ENCODE measurements at regions of chr12 and their contacts with region 1.

Region 1: DNA sequence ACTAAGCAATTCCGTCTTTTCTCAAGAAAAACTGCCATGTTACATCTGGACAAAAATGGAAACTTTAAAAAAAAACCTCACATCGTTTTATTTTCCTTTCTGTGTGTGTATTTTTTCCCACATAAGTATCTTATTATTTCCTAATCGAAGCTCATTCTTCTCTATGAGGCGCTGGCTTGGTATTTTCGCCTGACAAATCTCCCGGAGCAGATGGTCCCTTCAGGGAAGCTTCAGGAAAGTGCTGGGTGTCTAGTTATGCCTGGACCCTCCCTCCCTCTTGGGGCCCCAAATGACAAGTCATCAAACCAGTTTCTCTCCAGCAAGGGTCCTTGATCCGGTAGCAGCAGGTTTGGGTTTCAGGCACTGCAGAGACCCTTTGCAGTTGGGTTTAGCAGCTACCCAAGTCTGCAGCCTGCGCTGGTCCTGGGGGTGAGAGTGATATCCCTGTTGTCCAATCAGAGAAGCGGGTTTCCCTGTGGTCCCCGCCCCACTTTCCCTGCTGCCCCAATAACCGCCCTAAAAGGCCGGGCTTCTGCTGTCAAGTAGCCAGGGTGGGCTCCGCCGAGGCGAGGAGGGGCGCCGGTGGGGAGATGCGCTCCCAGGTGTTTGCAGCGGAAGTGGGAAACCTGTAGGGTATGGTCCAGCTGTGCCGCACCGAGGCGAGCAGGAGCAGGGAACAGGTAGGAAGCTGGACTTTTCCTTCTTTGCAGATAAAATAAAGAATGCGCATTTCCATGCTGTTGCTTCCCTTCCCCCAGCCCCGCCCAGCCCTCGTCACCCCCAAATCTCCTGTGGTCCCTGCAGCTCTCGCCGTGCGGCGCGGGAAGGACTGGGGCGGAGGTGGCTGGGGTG is at the start of gene CNTN1:
- DNase-seq: peak; percentile 74
- H3K4me3 ChIP-seq: peak within 1 kb of the TSS; percentile 58 to 73 (median 67)
- H3K27ac ChIP-seq: peak within 1 kb of the TSS; percentile 30
- H3K4me1 ChIP-seq: peaks cover 28% of the 10 kb centered on the region
- H3K27me3 ChIP-seq: no peaks in the 10 kb centered on the region
- CTCF ChIP-seq: no peak
- total RNA-seq, gene CNTN1: 29.7 to 61.1 TPM

Region 2: GRCh38 chr12:40622246-40622838 is 69.8 kb before region 1 on chr12:
- CTCF ChIA-PET with region 1: no interaction called
- dilution Hi-C with region 1: no loop called
- in situ Hi-C with region 1: no loop called
- intact Hi-C with region 1: loop called (anchors 5 kb)
- DNase-seq: peak; percentile 46
- H3K4me3 ChIP-seq: no peak overlapping the region
- H3K27ac ChIP-seq: no peak overlapping the region
- H3K4me1 ChIP-seq: no peaks in the 10 kb centered on the region
- H3K27me3 ChIP-seq: no peaks in the 10 kb centered on the region
- CTCF ChIP-seq: peak; percentile 82 to 83

Region 3: GRCh38 chr12:40727774-40728483 is 35.8 kb after region 1 on chr12:
- CTCF ChIA-PET with region 1: no interaction called
- dilution Hi-C with region 1: no loop called
- in situ Hi-C with region 1: no loop called
- intact Hi-C with region 1: loop called (anchors 5 kb)
- DNase-seq: peak; percentile 35
- H3K4me3 ChIP-seq: no peak overlapping the region
- H3K27ac ChIP-seq: no peak overlapping the region
- H3K4me1 ChIP-seq: peaks cover 3% of the 10 kb centered on the region
- H3K27me3 ChIP-seq: no peaks in the 10 kb centered on the region
- CTCF ChIP-seq: no peak

Region 4: GRCh38 chr12:40829738-40830144 is 137.6 kb after region 1 on chr12:
- CTCF ChIA-PET with region 1: no interaction called
- dilution Hi-C with region 1: no loop called
- in situ Hi-C with region 1: no loop called
- intact Hi-C with region 1: loop called (anchors 5 kb)
- DNase-seq: peak; percentile 83
- H3K4me3 ChIP-seq: no peak overlapping the region
- H3K27ac ChIP-seq: peak overlapping the region; percentile 80
- H3K4me1 ChIP-seq: peaks cover 23% of the 10 kb centered on the region
- H3K27me3 ChIP-seq: no peaks in the 10 kb centered on the region
- CTCF ChIP-seq: no peak

Region 5: GRCh38 chr12:40907115-40907521 is 215.0 kb after region 1 on chr12:
- CTCF ChIA-PET with region 1: no interaction called
- dilution Hi-C with region 1: no loop called
- in situ Hi-C with region 1: no loop called
- intact Hi-C with region 1: loop called (anchors 2 kb)
- DNase-seq: peak; percentile 91
- H3K4me3 ChIP-seq: peak overlapping the region in 2 of 3 experiments; percentile 3 to 11
- H3K27ac ChIP-seq: peak overlapping the region; percentile 93
- H3K4me1 ChIP-seq: peaks cover 15% of the 10 kb centered on the region
- H3K27me3 ChIP-seq: no peaks in the 10 kb centered on the region
- CTCF ChIP-seq: no peak

Measured in mammary epithelial cell (primary cell).